ENCODE measurements at regions of chr5 and their contacts with region 1.

Region 1: DNA sequence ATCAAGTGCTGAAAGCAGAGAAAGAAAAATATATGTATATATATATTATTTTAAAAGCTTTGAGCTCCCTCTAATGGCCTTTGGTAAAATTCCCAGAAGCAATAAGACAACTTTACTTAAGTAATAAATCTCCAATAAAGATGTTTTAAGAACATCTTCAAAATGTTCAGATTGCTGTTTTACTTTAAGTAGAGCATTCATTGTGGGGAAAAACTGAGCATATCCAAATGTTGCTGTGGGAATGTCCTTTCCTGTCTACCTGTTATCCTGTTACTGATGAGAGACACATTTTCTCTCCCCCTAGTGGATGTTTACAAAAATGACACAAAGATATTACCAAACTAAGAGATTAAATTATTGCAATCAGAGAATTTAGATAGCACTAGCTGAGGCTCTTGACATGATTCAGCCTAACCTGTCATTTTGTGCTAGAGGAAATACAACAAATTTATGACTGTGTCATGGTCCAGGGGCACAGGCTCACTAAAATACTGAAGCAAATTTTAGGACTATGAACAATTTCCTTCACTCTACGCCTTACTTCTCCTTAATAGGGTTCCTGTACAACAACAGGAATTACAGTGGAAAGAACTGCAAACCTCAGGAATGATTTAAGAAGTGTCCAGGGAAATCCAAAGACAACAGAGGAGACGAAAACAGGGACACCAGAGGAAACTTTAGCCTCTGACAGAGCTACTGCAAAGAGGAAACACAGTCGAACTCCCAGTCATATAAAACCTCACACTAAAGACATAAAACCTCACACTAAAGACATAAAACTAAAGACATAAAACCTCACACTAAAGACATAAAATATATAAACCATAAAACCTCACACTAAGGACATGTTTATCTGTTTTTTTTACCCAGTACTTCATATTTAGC is 24.3 kb upstream of the PRRC1 start:
- DNase-seq: no peak

Region 2: DNA sequence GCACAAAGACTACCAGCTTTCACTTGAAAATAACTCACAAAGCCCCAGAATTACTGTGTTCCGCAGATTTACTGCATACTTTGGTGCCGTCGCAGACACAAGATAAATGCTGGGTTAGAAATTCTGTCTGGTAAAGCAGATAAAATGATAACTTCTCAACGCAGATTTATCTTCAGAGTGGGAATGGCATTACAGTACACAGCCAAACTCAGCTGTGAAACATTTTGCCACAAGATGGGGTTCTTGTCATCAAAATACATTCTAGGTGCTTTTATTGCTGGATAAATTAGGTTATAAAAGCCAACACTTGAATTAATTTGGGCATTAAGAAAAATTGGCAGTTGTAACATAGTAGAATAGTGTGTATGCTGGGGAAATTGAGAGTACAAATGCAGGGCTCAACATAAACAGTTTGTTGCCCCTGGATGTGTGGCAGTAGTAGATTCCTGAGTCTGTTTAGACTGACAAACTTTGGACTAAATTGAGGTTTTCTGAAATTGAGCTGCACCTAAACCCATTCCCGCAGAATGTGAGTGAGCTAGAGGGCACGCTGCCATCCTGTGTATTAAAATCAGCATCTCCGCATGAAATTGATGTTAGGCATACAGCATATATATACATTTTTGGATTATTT is 655.1 kb before region 1 on chr5:
- intact Hi-C with region 1: loop called (anchors 5 kb)
- DNase-seq: no peak

Region 3: GRCh38 chr5:127290019-127290945 is 202.8 kb before region 1 on chr5 and contains the start of gene MEGF10:
- intact Hi-C with region 1: loop called (anchors 5 kb)
- DNase-seq: no peak
- total RNA-seq, gene MEGF10: 0.32 TPM

Region 4: DNA sequence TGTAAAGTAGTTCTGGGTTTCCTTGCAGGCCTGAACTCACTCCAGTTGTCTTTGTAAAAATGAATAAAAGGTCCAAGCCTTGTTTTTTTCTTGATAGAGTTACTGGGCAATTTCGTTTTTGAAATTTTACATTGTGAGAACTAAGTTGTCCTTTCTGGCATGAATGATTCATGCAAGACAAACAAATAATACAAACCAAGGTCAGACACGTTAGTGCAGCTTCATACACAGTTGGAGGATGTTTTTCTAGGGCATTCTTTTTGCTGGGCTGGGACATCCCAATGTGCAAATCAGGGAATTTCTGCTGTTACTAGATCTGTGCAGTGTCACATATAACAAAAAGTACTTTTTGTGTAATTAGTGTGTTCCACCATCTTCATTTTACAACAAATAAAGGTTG is 106.5 kb before region 1 on chr5:
- intact Hi-C with region 1: no loop called
- DNase-seq: no peak

Measured in cardiac septum (tissue), 1 donor.